ENCODE measurements at regions of chr2 and their contacts with region 1.

Region 1: GRCh38 chr2:218482651-218483050 is 63.7 kb downstream of the VIL1 start:
- DNase-seq: no peak
- H3K4me3 ChIP-seq: no peak overlapping the region
- H3K27ac ChIP-seq: no peak overlapping the region
- H3K4me1 ChIP-seq: no peaks in the 10 kb centered on the region
- H3K27me3 ChIP-seq: no peaks in the 10 kb centered on the region
- CTCF ChIP-seq: no peak
- POLR2A ChIP-seq: no peak

Region 2: GRCh38 chr2:218387374-218388194 is 95.1 kb before region 1 on chr2:
- intact Hi-C with region 1: no loop called
- DNase-seq: peak in 5 of 7 donors; percentile 64 to 76 (median 71)
- H3K4me3 ChIP-seq: peak overlapping the region in 2 of 4 donors; percentile 20 to 59
- H3K27ac ChIP-seq: peak overlapping the region in 2 of 5 donors; percentile 78 to 81
- H3K4me1 ChIP-seq: peaks cover 0 to 7% of the 10 kb centered on the region in 2 donors
- H3K27me3 ChIP-seq: no peaks in the 10 kb centered on the region
- CTCF ChIP-seq: no peak
- POLR2A ChIP-seq: no peak

Region 3: DNA sequence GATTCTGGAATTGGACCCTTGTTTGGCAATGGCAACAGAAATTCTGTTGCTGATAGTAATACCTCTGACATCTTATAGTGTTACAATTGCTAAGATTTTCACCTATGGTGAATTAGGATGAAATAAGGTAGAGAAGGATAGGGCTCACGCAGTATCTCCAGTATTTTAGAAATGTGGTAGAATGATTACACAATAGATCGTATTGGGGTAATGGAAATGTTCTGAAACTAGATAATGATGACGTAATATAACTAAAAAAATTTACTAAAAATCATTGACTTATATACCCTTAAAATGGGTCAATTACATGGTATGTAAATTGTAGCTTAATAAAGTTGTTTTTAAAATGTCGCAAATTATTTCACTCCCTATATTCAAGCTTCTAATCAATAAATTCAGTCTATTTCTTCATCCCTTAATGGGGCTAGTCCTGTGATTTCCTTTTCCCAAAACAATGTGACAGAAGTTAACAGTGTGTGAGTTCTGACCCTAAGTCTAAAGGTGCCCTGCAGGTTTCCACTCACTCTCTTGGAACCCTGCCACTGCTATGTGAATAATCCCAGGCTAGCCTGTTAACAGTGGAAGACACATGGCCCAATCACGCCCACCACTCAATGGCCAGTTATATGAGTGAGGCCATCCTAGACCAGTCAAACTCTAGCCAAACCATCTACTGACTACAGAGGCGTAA is 54.3 kb after region 1 on chr2:
- intact Hi-C with region 1: loop called in 1 of 2 experiments (anchors 10 kb)
- DNase-seq: no peak
- H3K4me3 ChIP-seq: no peak overlapping the region
- H3K27ac ChIP-seq: no peak overlapping the region
- H3K4me1 ChIP-seq: no peaks in the 10 kb centered on the region
- H3K27me3 ChIP-seq: no peaks in the 10 kb centered on the region
- CTCF ChIP-seq: no peak
- POLR2A ChIP-seq: no peak

Measured in adrenal gland (tissue), 19 donors.